ENCODE measurements at regions of chr16 and their contacts with region 1.

Region 1: DNA sequence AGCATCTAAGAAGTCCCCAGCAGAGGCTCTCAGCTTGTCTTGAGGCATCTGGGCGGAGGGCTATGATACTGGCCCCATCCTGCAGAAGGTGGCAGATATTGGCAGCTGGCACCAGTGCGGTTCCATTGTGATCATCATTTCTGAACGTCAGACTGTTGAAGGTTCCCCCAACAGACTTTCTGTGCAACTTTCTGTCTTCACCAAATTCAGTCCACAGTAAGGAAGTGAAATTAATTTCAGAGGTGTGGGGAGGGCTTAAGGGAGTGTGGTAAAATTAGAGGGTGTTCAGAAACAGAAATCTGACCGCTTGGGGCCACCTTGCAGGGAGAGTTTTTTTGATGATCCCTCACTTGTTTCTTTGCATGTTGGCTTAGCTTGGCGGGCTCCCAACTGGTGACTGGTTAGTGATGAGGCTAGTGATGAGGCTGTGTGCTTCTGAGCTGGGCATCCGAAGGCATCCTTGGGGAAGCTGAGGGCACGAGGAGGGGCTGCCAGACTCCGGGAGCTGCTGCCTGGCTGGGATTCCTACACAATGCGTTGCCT is at the start of gene CIITA:
- DNase-seq: peak; percentile 77
- ATAC-seq: peak; percentile 54 to 63
- total RNA-seq, gene CIITA: 6.6 to 9.9 TPM

Region 2: GRCh38 chr16:10835281-10835931 is 41.5 kb before region 1 on chr16:
- intact Hi-C with region 1: loop called in 1 of 2 experiments (anchors 5 kb)
- DNase-seq: no peak
- ATAC-seq: no peak

Region 3: GRCh38 chr16:11797166-11797956 is 920.5 kb after region 1 on chr16 and contains the start of gene ZC3H7A:
- intact Hi-C with region 1: no loop called
- DNase-seq: peak; percentile 98
- ATAC-seq: peak; percentile 98
- total RNA-seq, gene ZC3H7A: 24.0 to 28.2 TPM